ENCODE measurements at regions of chr5 and their contacts with region 1.

Region 1: DNA sequence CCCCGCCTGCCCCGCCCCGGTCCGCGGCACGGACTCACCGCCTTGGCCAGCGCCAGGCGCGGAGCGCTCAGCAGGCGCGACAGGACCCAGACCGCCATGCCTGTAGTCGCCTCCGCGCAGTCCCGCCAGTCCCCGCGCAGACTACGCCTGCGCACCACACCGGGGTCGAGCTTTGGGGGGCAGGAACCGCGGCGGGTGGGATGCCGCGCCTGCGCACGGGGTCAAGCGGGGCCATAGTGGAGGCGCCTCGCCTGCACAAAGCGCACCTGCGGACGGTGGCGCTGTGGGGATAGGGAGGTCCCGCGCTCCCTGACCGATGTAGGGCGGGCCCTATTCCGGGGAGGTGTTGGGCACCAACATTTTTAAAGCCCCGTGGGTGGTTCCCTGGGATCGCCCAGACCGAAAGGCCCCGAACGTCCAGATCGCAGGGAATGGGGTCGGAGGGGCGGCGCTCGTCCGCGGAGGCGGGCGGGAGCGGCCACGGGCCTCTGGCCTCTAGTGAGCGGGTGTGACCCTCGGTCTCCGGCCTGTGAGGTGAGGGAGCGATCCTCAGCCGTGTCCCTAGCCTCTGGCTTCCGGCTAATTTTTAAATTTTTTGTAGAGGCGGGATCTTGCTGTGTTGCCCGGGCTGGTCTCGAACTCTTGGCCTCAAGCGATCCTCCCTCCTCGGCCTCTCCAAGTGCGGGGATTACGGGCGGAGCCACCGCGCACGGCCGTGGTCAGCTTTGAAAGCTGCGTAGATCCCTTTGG is 70.8 kb upstream of the LPCAT1 start:
- DNase-seq: peak; percentile 87
- ATAC-seq: peak; percentile 96
- H3K4me3 ChIP-seq: peak overlapping the region; percentile 76 to 98 (median 84)
- H3K27ac ChIP-seq: peak overlapping the region; percentile 71
- H3K4me1 ChIP-seq: peaks cover 40% of the 10 kb centered on the region
- H3K27me3 ChIP-seq: no peaks in the 10 kb centered on the region
- CTCF ChIP-seq: peak; percentile 92
- EP300 ChIP-seq: no peak
- POLR2A ChIP-seq: peak; percentile 33 to 85; a peak in 2 of 4 replicates
- RAD21 ChIP-seq: peak; percentile 66

Region 2: DNA sequence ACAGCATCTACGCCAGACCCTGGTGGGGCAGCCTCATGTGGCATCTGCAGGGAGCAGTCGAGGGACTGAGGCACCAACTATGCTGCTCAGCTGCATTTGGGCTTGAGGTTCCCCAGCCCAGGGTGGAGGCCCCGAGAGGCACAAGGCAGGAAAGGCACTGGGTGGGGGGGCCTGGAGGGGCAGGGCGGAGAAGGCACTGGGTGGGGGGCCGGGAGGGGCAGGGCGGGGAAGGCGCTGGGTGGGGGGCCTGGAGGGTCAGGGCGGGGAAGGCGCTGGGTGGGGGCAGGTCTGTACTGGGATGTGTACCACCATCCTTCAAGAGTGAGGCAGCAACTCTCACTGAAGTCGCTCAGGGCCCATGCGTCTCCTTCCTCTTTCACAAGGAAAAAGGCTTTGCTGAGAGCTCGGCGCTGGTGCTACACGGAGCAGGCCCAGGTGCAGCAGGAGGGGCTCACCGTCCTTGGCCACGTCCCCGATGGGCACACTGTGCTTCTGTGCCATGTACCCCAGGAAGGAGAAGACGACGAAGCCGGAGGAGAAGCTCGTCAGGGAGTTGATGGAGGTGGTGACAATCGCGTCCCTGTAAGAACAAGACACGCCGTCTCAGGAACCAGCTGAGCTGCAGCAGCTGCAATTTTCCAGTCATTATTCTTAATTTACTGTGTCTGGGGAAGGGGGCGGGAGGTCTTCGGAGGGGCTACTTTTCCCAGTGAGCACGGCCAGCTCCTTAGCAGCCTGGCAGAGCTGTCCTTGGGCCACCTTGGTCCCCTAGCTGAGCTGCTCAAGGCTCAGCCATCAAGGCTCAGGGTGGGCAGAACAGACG is 180.1 kb before region 1 on chr5:
- CTCF ChIA-PET with region 1: no interaction called
- POLR2A ChIA-PET with region 1: no interaction called
- in situ Hi-C with region 1: no loop called
- intact Hi-C with region 1: no loop called
- DNase-seq: no peak
- ATAC-seq: no peak
- H3K4me3 ChIP-seq: no peak overlapping the region
- H3K27ac ChIP-seq: no peak overlapping the region
- H3K4me1 ChIP-seq: no peaks in the 10 kb centered on the region
- H3K27me3 ChIP-seq: peaks cover 19 to 47% of the 10 kb centered on the region in 2 experiments
- CTCF ChIP-seq: no peak
- EP300 ChIP-seq: no peak
- POLR2A ChIP-seq: no peak
- RAD21 ChIP-seq: no peak

Region 3: GRCh38 chr5:1523771-1524480 is 70.6 kb before region 1 on chr5 and contains the start of gene LPCAT1:
- CTCF ChIA-PET with region 1: no interaction called
- POLR2A ChIA-PET with region 1: interaction called, 9 read pairs
- in situ Hi-C with region 1: no loop called
- intact Hi-C with region 1: loop called (anchors 5 kb)
- DNase-seq: peak; percentile 30
- ATAC-seq: peak; percentile 76
- H3K4me3 ChIP-seq: peak within 1 kb of the TSS; percentile 81 to 94 (median 90)
- H3K27ac ChIP-seq: peak within 1 kb of the TSS; percentile 66
- H3K4me1 ChIP-seq: peaks cover 54% of the 10 kb centered on the region
- H3K27me3 ChIP-seq: no peaks in the 10 kb centered on the region
- CTCF ChIP-seq: no peak; the same call in 1 of the 2 replicates
- EP300 ChIP-seq: no peak
- POLR2A ChIP-seq: no peak; a peak in 1 of 4 replicates
- RAD21 ChIP-seq: no peak
- total RNA-seq, gene LPCAT1: 16.0 and 29.8 TPM in 2 replicates

Region 4: GRCh38 chr5:1555011-1555807 is 39.3 kb before region 1 on chr5:
- CTCF ChIA-PET with region 1: no interaction called
- POLR2A ChIA-PET with region 1: interaction called, 12 read pairs
- in situ Hi-C with region 1: no loop called
- intact Hi-C with region 1: no loop called
- DNase-seq: peak; percentile 96
- ATAC-seq: peak; percentile 85
- H3K4me3 ChIP-seq: peak overlapping the region in 1 of 3 experiments; percentile 32; a peak in 2 of 6 replicates
- H3K27ac ChIP-seq: peak overlapping the region; percentile 60
- H3K4me1 ChIP-seq: peaks cover 59% of the 10 kb centered on the region
- H3K27me3 ChIP-seq: no peaks in the 10 kb centered on the region
- CTCF ChIP-seq: peak; percentile 39
- EP300 ChIP-seq: peak; percentile 87 to 98
- POLR2A ChIP-seq: peak in 1 of 2 experiments; percentile 44; a peak in 1 of 4 replicates
- RAD21 ChIP-seq: no peak

Region 5: DNA sequence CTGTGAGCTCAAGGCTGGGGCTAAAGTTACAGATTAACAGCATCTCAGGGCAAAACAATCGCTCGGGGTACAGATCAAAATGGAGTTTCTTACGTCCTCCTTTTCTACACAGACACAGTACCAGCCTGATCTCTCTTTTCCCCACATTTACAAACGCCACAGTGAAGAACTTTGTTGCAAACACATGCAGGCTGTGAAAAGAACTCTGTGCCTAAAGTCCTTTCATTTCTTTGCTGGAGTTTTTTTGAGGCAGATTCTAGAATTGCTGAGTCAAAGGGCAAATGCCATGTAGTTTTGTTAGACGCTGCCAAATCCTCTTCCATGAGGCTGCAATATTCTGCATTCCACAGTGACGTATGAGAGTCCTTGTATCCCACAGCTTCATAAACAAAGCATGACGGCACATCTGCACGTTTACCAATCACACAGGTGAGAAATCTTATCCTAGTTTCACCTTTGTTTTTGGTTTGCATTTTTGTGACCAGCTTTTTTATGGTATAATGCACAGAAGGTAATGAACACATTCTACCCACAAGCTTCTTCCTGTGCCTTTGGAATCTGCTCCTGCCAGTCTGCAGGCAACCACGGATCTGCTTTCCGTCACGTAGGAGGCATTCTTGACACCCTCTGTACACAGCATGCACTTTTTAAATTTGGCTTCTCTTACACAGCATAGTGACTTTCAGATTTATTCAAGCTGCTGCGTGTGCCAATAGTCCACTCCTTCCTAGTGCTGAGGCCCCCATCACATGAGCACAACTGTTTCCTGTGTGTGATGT is 26.1 kb before region 1 on chr5:
- CTCF ChIA-PET with region 1: no interaction called
- POLR2A ChIA-PET with region 1: interaction called, 10 read pairs
- in situ Hi-C with region 1: no loop called
- intact Hi-C with region 1: no loop called
- DNase-seq: peak; percentile 95
- ATAC-seq: peak; percentile 42
- H3K4me3 ChIP-seq: peak overlapping the region in 1 of 3 experiments; percentile 36; a peak in 2 of 6 replicates
- H3K27ac ChIP-seq: peak overlapping the region; percentile 93
- H3K4me1 ChIP-seq: peaks cover 65% of the 10 kb centered on the region
- H3K27me3 ChIP-seq: no peaks in the 10 kb centered on the region
- CTCF ChIP-seq: no peak
- EP300 ChIP-seq: no peak
- POLR2A ChIP-seq: no peak
- RAD21 ChIP-seq: no peak